ENCODE measurements at regions of chr19 and their contacts with region 1.

Region 1: DNA sequence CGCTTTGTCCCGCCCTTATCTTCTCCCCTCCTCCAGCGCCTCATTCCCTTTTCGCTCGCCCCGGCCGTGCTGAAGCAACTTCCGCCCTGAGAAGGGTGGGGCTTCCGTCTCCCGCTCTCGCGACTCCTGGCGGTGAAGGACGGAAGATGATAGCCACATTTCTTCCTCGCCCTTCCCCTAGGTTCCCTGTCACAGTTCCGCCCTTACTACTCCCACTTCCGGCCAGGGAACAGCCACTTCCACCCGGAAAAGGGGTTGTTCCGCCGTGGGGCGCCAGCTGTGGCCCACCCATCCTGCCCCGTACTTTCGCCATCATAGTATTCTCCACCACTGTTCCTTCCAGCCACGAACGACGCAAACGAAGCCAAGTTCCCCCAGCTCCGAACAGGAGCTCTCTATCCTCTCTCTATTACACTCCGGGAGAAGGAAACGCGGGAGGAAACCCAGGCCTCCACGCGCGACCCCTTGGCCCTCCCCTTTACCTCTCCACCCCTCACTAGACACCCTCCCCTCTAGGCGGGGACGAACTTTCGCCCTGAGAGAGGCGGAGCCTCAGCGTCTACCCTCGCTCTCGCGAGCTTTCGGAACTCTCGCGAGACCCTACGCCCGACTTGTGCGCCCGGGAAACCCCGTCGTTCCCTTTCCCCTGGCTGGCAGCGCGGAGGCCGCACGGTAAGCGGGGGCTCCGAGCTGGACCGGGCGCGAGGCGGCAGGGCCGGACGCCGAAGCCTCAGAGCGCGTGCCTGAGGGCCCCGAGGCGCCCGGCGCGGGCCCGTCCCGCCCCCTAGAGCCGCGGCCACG is at the start of gene RPS19:
- DNase-seq: peak; percentile 96 to 99 (median 98)
- ATAC-seq: peak; percentile 87
- H3K4me3 ChIP-seq: peak within 1 kb of the TSS; percentile 74 to 92
- H3K4me3 Mint-ChIP-seq: peak within 1 kb of the TSS; percentile 94
- H3K27ac ChIP-seq: peak within 1 kb of the TSS; percentile 79 to 97
- H3K27ac Mint-ChIP-seq: peak within 1 kb of the TSS; percentile 96
- H3K4me1 ChIP-seq: peaks cover 46% of the 10 kb centered on the region
- H3K4me1 Mint-ChIP-seq: peaks cover 50% of the 10 kb centered on the region
- H3K27me3 ChIP-seq: no peaks in the 10 kb centered on the region
- H3K27me3 Mint-ChIP-seq: peaks cover 4% of the 10 kb centered on the region
- CTCF ChIP-seq: peak; percentile 82
- total RNA-seq, gene RPS19: 3,663 to 3,781 TPM

Region 2: GRCh38 chr19:41363753-41364523 is 495.9 kb before region 1 on chr19 and contains the start of gene B9D2:
- CTCF ChIA-PET with region 1: no interaction called
- POLR2A ChIA-PET with region 1: no interaction called
- intact Hi-C with region 1: loop called in 1 of 2 experiments (anchors 5 kb)
- DNase-seq: peak; percentile 95 to 99 (median 98)
- ATAC-seq: peak; percentile 89
- H3K4me3 ChIP-seq: peak within 1 kb of the TSS; percentile 80 to 81
- H3K4me3 Mint-ChIP-seq: peak within 1 kb of the TSS; percentile 98
- H3K27ac ChIP-seq: peak within 1 kb of the TSS; percentile 99 to 100
- H3K27ac Mint-ChIP-seq: peak within 1 kb of the TSS; percentile 100
- H3K4me1 ChIP-seq: peaks cover 27% of the 10 kb centered on the region
- H3K4me1 Mint-ChIP-seq: peaks cover 30% of the 10 kb centered on the region
- H3K27me3 ChIP-seq: no peaks in the 10 kb centered on the region
- H3K27me3 Mint-ChIP-seq: no peaks in the 10 kb centered on the region
- CTCF ChIP-seq: no peak
- total RNA-seq, gene B9D2: 19.6 to 25.9 TPM

Region 3: GRCh38 chr19:41895745-41896580 is 36.1 kb after region 1 on chr19:
- CTCF ChIA-PET with region 1: interaction called, 20 read pairs
- POLR2A ChIA-PET with region 1: interaction called, 12 read pairs
- intact Hi-C with region 1: no loop called
- DNase-seq: peak in 3 of 9 experiments; percentile 40 to 62 (median 48)
- ATAC-seq: peak; percentile 64
- H3K4me3 ChIP-seq: no peak overlapping the region
- H3K4me3 Mint-ChIP-seq: peak overlapping the region; percentile 61
- H3K27ac ChIP-seq: peak overlapping the region; percentile 37 to 59
- H3K27ac Mint-ChIP-seq: peak overlapping the region; percentile 90
- H3K4me1 ChIP-seq: peaks cover 88% of the 10 kb centered on the region
- H3K4me1 Mint-ChIP-seq: peaks cover 69% of the 10 kb centered on the region
- H3K27me3 ChIP-seq: no peaks in the 10 kb centered on the region
- H3K27me3 Mint-ChIP-seq: no peaks in the 10 kb centered on the region
- CTCF ChIP-seq: peak; percentile 36

Region 4: GRCh38 chr19:41934849-41935374 is 75.1 kb after region 1 on chr19:
- CTCF ChIA-PET with region 1: interaction called, 7 read pairs
- POLR2A ChIA-PET with region 1: interaction called, 15 read pairs
- intact Hi-C with region 1: loop called (anchors 1 kb)
- DNase-seq: peak; percentile 63 to 89 (median 81)
- ATAC-seq: peak; percentile 37
- H3K4me3 ChIP-seq: no peak overlapping the region
- H3K4me3 Mint-ChIP-seq: peak overlapping the region; percentile 32
- H3K27ac ChIP-seq: no peak overlapping the region
- H3K27ac Mint-ChIP-seq: peak overlapping the region; percentile 84
- H3K4me1 ChIP-seq: peaks cover 45% of the 10 kb centered on the region
- H3K4me1 Mint-ChIP-seq: peaks cover 55% of the 10 kb centered on the region
- H3K27me3 ChIP-seq: peaks cover 0 to 5% of the 10 kb centered on the region in 2 experiments
- H3K27me3 Mint-ChIP-seq: no peaks in the 10 kb centered on the region
- CTCF ChIP-seq: peak; percentile 87

Region 5: GRCh38 chr19:41959056-41960053 is 99.5 kb after region 1 on chr19 and contains the start of gene RABAC1:
- CTCF ChIA-PET with region 1: interaction called, 9 read pairs
- POLR2A ChIA-PET with region 1: interaction called, 9 read pairs
- intact Hi-C with region 1: loop called (anchors 1 kb)
- DNase-seq: peak; percentile 73 to 93 (median 90)
- ATAC-seq: peak; percentile 87
- H3K4me3 ChIP-seq: peak within 1 kb of the TSS; percentile 80 to 91
- H3K4me3 Mint-ChIP-seq: peak within 1 kb of the TSS; percentile 97
- H3K27ac ChIP-seq: peak within 1 kb of the TSS; percentile 55 to 82
- H3K27ac Mint-ChIP-seq: peak within 1 kb of the TSS; percentile 96
- H3K4me1 ChIP-seq: peaks cover 16% of the 10 kb centered on the region
- H3K4me1 Mint-ChIP-seq: peaks cover 23% of the 10 kb centered on the region
- H3K27me3 ChIP-seq: no peaks in the 10 kb centered on the region
- H3K27me3 Mint-ChIP-seq: no peaks in the 10 kb centered on the region
- CTCF ChIP-seq: peak; percentile 26
- total RNA-seq, gene RABAC1: 99.5 to 114 TPM

Region 6: GRCh38 chr19:42325273-42325895 is 465.6 kb after region 1 on chr19 and contains the start of gene MEGF8:
- CTCF ChIA-PET with region 1: no interaction called
- POLR2A ChIA-PET with region 1: no interaction called
- intact Hi-C with region 1: loop called in 1 of 2 experiments (anchors 1 kb)
- DNase-seq: peak; percentile 96 to 99 (median 98)
- ATAC-seq: peak; percentile 93
- H3K4me3 ChIP-seq: peak within 1 kb of the TSS; percentile 85 to 98
- H3K4me3 Mint-ChIP-seq: peak within 1 kb of the TSS; percentile 97
- H3K27ac ChIP-seq: peak within 1 kb of the TSS; percentile 36 to 56
- H3K27ac Mint-ChIP-seq: peak within 1 kb of the TSS; percentile 88
- H3K4me1 ChIP-seq: peaks cover 12% of the 10 kb centered on the region
- H3K4me1 Mint-ChIP-seq: peaks cover 24% of the 10 kb centered on the region
- H3K27me3 ChIP-seq: peaks cover 4 to 7% of the 10 kb centered on the region in 2 experiments
- H3K27me3 Mint-ChIP-seq: peaks cover 12% of the 10 kb centered on the region
- CTCF ChIP-seq: peak; percentile 66
- total RNA-seq, gene MEGF8: 5.2 to 5.9 TPM

Region 7: GRCh38 chr19:42440357-42441048 is 580.7 kb after region 1 on chr19:
- CTCF ChIA-PET with region 1: no interaction called
- POLR2A ChIA-PET with region 1: no interaction called
- intact Hi-C with region 1: no loop called
- DNase-seq: peak; percentile 69 to 88 (median 80)
- ATAC-seq: peak; percentile 43
- H3K4me3 ChIP-seq: no peak overlapping the region
- H3K4me3 Mint-ChIP-seq: no peak overlapping the region
- H3K27ac ChIP-seq: no peak overlapping the region
- H3K27ac Mint-ChIP-seq: peak overlapping the region; percentile 4
- H3K4me1 ChIP-seq: peaks cover 15% of the 10 kb centered on the region
- H3K4me1 Mint-ChIP-seq: peaks cover 20% of the 10 kb centered on the region
- H3K27me3 ChIP-seq: no peaks in the 10 kb centered on the region
- H3K27me3 Mint-ChIP-seq: no peaks in the 10 kb centered on the region
- CTCF ChIP-seq: peak; percentile 96